Thyroid gland (tissue), 4 donors: ENCODE measurements at regions of chr5 and their contacts with region 1.

Region 1: GRCh38 chr5:157308836-157309465 is 43.0 kb downstream of the CYFIP2 start:
- DNase-seq: no peak
- H3K4me3 ChIP-seq: no peak overlapping the region
- H3K27ac ChIP-seq: no peak overlapping the region
- H3K4me1 ChIP-seq: peaks cover 0 to 6% of the 10 kb centered on the region in 2 donors
- H3K27me3 ChIP-seq: no peaks in the 10 kb centered on the region
- CTCF ChIP-seq: no peak
- POLR2A ChIP-seq: no peak

Region 2: DNA sequence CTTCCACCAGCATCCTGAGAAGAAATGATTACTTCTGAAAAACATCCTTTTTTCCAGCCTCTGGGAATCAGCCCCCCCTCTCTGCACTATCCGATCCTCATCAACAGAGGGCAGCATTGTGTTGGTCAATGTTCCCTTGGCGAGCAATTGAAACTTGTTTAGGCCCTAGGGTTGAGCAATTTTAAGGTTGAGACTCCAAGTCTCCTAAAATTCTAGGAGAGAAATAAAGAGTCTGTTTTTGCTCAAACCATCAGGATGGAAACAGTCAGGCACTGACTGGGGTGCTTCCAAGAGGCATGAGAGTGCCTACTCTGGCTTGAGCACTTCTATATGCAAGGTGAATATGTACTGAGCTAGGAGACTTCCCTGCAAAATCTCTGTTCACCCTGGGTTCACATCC is 55.4 kb before region 1 on chr5:
- intact Hi-C with region 1: loop called (anchors 5 kb)
- DNase-seq: peak; percentile 45 to 51
- H3K4me3 ChIP-seq: no peak overlapping the region
- H3K27ac ChIP-seq: no peak overlapping the region
- H3K4me1 ChIP-seq: no peaks in the 10 kb centered on the region
- H3K27me3 ChIP-seq: no peaks in the 10 kb centered on the region
- CTCF ChIP-seq: peak in 5 of 6 experiments; percentile 45 to 91 (median 82)
- POLR2A ChIP-seq: no peak